CD4-positive, alpha-beta memory T cell (primary cell): ENCODE measurements at regions of chr12 and their contacts with region 1.

Region 1: GRCh38 chr12:30847259-30847658 is 79.3 kb upstream of the TSPAN11 start:
- DNase-seq: peak in 4 of 5 donors; percentile 52 to 62 (median 58)
- H3K4me3 ChIP-seq: no peak overlapping the region
- H3K4me3 Mint-ChIP-seq: no peak overlapping the region
- H3K27ac ChIP-seq: no peak overlapping the region
- H3K27ac Mint-ChIP-seq: no peak overlapping the region
- H3K4me1 ChIP-seq: no peaks in the 10 kb centered on the region
- H3K4me1 Mint-ChIP-seq: peaks cover 4 to 14% (median 9%) of the 10 kb centered on the region in 4 donors
- H3K27me3 ChIP-seq: no peaks in the 10 kb centered on the region
- H3K27me3 Mint-ChIP-seq: no peaks in the 10 kb centered on the region

Region 2: GRCh38 chr12:29073628-29074239 is 1773.5 kb before region 1 on chr12:
- CTCF ChIA-PET with region 1: interaction called, 3 read pairs
- POLR2A ChIA-PET with region 1: no interaction called
- intact Hi-C with region 1: loop called (anchors 10 kb)
- DNase-seq: peak; percentile 32 to 49 (median 37)
- H3K4me3 ChIP-seq: no peak overlapping the region
- H3K4me3 Mint-ChIP-seq: no peak overlapping the region
- H3K27ac ChIP-seq: no peak overlapping the region
- H3K27ac Mint-ChIP-seq: no peak overlapping the region
- H3K4me1 ChIP-seq: no peaks in the 10 kb centered on the region
- H3K4me1 Mint-ChIP-seq: peaks cover 0 to 2% (median 0%) of the 10 kb centered on the region in 4 donors
- H3K27me3 ChIP-seq: no peaks in the 10 kb centered on the region
- H3K27me3 Mint-ChIP-seq: peaks cover 13 to 18% of the 10 kb centered on the region in 2 donors

Region 3: GRCh38 chr12:29519585-29520182 is 1327.6 kb before region 1 on chr12:
- CTCF ChIA-PET with region 1: interaction called, 28 read pairs
- POLR2A ChIA-PET with region 1: no interaction called
- intact Hi-C with region 1: loop called (anchors 1 kb)
- DNase-seq: peak in 4 of 5 donors; percentile 11 to 30 (median 18)
- H3K4me3 ChIP-seq: no peak overlapping the region
- H3K4me3 Mint-ChIP-seq: no peak overlapping the region
- H3K27ac ChIP-seq: no peak overlapping the region
- H3K27ac Mint-ChIP-seq: no peak overlapping the region
- H3K4me1 ChIP-seq: no peaks in the 10 kb centered on the region
- H3K4me1 Mint-ChIP-seq: no peaks in the 10 kb centered on the region
- H3K27me3 ChIP-seq: no peaks in the 10 kb centered on the region
- H3K27me3 Mint-ChIP-seq: peaks cover 4 to 8% of the 10 kb centered on the region in 2 donors

Region 4: GRCh38 chr12:30754709-30755394 is 92.4 kb before region 1 on chr12 and contains the start of gene CAPRIN2:
- CTCF ChIA-PET with region 1: interaction called, 3 read pairs
- POLR2A ChIA-PET with region 1: interaction called, 3 read pairs
- intact Hi-C with region 1: loop called (anchors 10 kb)
- DNase-seq: peak; percentile 92 to 94 (median 93)
- H3K4me3 ChIP-seq: peak within 1 kb of the TSS; percentile 60 to 74
- H3K4me3 Mint-ChIP-seq: peak within 1 kb of the TSS; percentile 94 to 98 (median 96)
- H3K27ac ChIP-seq: peak within 1 kb of the TSS; percentile 67
- H3K27ac Mint-ChIP-seq: peak within 1 kb of the TSS; percentile 89 to 95 (median 94)
- H3K4me1 ChIP-seq: peaks cover 20% of the 10 kb centered on the region
- H3K4me1 Mint-ChIP-seq: peaks cover 20 to 50% (median 37%) of the 10 kb centered on the region in 4 donors
- H3K27me3 ChIP-seq: no peaks in the 10 kb centered on the region
- H3K27me3 Mint-ChIP-seq: no peaks in the 10 kb centered on the region
- total RNA-seq, gene CAPRIN2: 42.9 to 47.0 TPM

Region 5: DNA sequence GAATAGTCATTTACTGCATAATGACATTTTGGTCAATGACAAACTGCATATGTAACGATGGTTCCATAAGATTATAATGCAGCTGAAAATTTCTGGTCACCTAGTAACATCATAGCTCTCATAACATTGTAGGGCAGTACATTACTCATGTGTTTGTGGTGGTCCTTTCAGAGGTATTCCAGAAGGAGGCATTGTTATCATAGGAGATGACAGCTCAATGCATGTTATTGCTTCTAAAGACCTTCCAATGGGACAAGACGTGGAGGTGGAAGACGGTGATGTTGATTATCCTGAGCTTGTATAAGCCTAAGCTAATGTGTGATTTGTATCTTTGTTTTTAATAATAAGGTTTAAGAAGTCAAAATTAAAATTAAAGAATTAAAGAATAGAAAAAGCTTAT is 35.4 kb after region 1 on chr12:
- CTCF ChIA-PET with region 1: no interaction called
- POLR2A ChIA-PET with region 1: no interaction called
- intact Hi-C with region 1: no loop called
- DNase-seq: no peak
- H3K4me3 ChIP-seq: no peak overlapping the region
- H3K4me3 Mint-ChIP-seq: no peak overlapping the region
- H3K27ac ChIP-seq: no peak overlapping the region
- H3K27ac Mint-ChIP-seq: no peak overlapping the region
- H3K4me1 ChIP-seq: no peaks in the 10 kb centered on the region
- H3K4me1 Mint-ChIP-seq: no peaks in the 10 kb centered on the region
- H3K27me3 ChIP-seq: no peaks in the 10 kb centered on the region
- H3K27me3 Mint-ChIP-seq: peaks cover 11 to 18% of the 10 kb centered on the region in 2 donors

Region 6: DNA sequence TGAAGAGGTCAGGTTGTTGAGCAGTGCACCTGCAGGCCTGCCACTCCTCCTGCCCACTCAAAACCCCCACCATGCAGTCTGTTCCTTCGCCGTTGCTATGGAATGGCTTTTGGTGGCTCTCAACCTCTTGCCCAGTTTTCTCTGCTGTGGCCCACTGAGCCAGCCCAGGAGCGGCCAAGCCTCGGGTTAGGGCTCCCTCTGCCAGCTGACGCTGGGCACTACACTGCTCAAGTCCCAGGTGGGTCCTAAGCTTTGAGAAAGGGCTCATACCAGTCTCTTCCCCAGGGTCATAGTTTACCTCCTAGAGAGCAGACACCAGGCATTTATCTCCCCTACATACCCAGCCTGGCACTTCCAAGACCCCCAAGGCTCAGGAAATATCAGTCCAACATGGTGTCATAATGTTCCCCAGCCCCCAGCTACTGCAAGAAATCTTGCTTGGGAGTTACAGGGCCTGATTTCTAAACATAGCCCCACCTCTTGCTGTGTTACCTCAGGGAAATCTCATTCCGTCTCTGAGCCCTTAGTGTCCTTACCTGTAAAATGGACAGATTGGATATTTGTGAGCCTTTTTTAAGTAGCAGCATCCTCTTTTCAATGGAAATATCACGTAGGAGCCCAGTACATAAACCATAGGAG is 138.7 kb after region 1 on chr12:
- CTCF ChIA-PET with region 1: interaction called, 3 read pairs
- POLR2A ChIA-PET with region 1: no interaction called
- intact Hi-C with region 1: loop called (anchors 5 kb)
- DNase-seq: no peak
- H3K4me3 ChIP-seq: no peak overlapping the region
- H3K4me3 Mint-ChIP-seq: no peak overlapping the region
- H3K27ac ChIP-seq: no peak overlapping the region
- H3K27ac Mint-ChIP-seq: no peak overlapping the region
- H3K4me1 ChIP-seq: no peaks in the 10 kb centered on the region
- H3K4me1 Mint-ChIP-seq: no peaks in the 10 kb centered on the region
- H3K27me3 ChIP-seq: no peaks in the 10 kb centered on the region
- H3K27me3 Mint-ChIP-seq: no peaks in the 10 kb centered on the region